Ascending aorta (tissue), 2 donors: ENCODE measurements at regions of chr11 and their contacts with region 1.

Region 1: DNA sequence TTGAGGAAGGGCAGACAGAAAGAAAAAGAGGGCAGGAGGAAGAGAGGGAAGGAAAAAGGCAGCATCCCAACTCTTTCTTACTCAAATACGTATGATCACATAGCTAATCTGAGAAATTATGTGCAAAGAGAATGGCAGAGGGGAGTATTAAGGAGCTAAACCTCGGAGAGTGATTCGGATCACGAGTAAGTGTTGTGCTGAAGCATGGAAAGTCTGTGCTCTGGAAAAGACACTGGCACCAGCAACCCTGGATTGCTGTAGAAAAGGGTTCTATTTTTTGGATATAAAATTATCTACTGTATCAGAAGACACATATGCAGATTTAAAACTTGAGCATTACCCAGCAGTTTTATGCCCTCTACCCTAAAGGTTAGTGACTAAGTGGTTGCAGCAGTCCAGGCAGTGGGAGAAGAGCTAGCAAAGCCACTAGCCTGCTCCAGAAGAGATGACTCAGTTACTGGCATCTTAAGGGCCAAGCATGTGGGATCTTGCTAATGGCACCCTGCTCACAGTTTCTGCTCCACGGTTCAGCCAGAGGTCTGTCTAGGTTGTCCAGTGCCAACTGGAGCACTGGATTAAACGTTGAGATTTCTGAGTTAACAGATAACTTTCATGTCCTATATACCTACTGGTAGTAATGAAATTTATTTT is 151.7 kb downstream of the SWAP70 start:
- DNase-seq: no peak
- H3K4me3 ChIP-seq: no peak overlapping the region
- H3K27ac ChIP-seq: no peak overlapping the region
- H3K4me1 ChIP-seq: no peaks in the 10 kb centered on the region
- H3K27me3 ChIP-seq: no peaks in the 10 kb centered on the region
- CTCF ChIP-seq: no peak

Region 2: DNA sequence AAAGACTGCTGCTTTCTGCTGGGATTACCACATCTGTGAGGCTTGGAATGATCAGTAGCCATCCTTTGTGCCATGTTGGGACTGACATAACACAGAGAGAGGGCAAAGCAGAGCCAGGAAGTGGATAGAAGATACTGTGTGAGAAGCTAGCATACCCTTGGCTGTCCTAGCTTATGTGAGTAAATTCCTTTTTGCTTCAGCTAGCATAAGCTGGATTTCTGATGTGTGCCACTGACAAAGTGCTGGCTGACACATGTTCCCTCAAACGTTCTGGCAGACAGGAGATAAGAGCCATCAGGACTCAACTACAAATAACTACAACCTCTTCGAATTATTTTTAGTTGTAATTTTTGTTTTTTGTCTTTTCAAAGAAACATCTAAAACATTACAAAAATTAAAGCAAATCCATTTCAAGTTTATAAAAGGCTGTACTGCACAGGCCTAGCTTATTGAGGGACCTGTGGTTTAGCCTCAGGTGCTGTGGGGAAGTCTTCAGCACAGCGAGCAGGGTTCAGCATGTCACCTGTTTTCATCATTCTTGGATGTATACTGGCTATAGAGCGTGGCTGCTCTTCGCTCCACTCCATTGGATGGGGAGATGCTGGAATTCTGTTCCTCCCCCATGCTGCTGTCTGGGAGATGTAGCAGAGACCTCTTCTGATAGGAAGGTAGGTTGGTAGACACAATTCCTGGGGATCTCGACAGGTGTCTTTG is 30.9 kb before region 1 on chr11:
- intact Hi-C with region 1: loop called (anchors 5 kb)
- DNase-seq: no peak
- H3K4me3 ChIP-seq: no peak overlapping the region
- H3K27ac ChIP-seq: no peak overlapping the region
- H3K4me1 ChIP-seq: peaks cover 0 to 3% of the 10 kb centered on the region in 2 donors
- H3K27me3 ChIP-seq: no peaks in the 10 kb centered on the region
- CTCF ChIP-seq: no peak